OCI-LY7 (cell line): ENCODE measurements at regions of chr15 and their contacts with region 1.

Region 1: GRCh38 chr15:44663409-44664308 is at the start of gene SPG11:
- DNase-seq: peak; percentile 99
- H3K4me3 ChIP-seq: peak within 1 kb of the TSS; percentile 79
- H3K27ac ChIP-seq: peak within 1 kb of the TSS; percentile 89
- H3K4me1 ChIP-seq: peaks cover 52% of the 10 kb centered on the region
- CTCF ChIP-seq: peak; percentile 83
- total RNA-seq, gene SPG11: 65.2 and 69.1 TPM in 2 replicates

Region 2: GRCh38 chr15:44593042-44593736 is 70.5 kb before region 1 on chr15:
- CTCF ChIA-PET with region 1: no interaction called
- POLR2A ChIA-PET with region 1: no interaction called
- intact Hi-C with region 1: loop called (anchors 5 kb)
- DNase-seq: peak; percentile 59
- H3K4me3 ChIP-seq: no peak overlapping the region
- H3K27ac ChIP-seq: no peak overlapping the region
- H3K4me1 ChIP-seq: no peaks in the 10 kb centered on the region
- CTCF ChIP-seq: peak; percentile 84

Region 3: GRCh38 chr15:44728576-44729407 is 65.1 kb after region 1 on chr15:
- CTCF ChIA-PET with region 1: interaction called, 4 read pairs
- POLR2A ChIA-PET with region 1: interaction called, 19 read pairs
- intact Hi-C with region 1: loop called (anchors 2 kb)
- DNase-seq: peak; percentile 98
- H3K4me3 ChIP-seq: peak overlapping the region; percentile 81
- H3K27ac ChIP-seq: peak overlapping the region; percentile 90
- H3K4me1 ChIP-seq: peaks cover 56% of the 10 kb centered on the region
- CTCF ChIP-seq: no peak

Region 4: GRCh38 chr15:44775953-44776352 is 112.3 kb after region 1 on chr15:
- CTCF ChIA-PET with region 1: no interaction called
- POLR2A ChIA-PET with region 1: no interaction called
- intact Hi-C with region 1: no loop called
- DNase-seq: peak; percentile 14
- H3K4me3 ChIP-seq: no peak overlapping the region
- H3K27ac ChIP-seq: no peak overlapping the region
- H3K4me1 ChIP-seq: peaks cover 5% of the 10 kb centered on the region
- CTCF ChIP-seq: no peak